ENCODE measurements at regions of chr10 and their contacts with region 1.

Region 1: GRCh38 chr10:21099291-21100062 is 202.4 kb upstream of the NEBL start:
- DNase-seq: no peak
- ATAC-seq: no peak
- H3K4me3 ChIP-seq: no peak overlapping the region
- H3K27ac ChIP-seq: no peak overlapping the region
- H3K4me1 ChIP-seq: peaks cover 36% of the 10 kb centered on the region
- H3K27me3 ChIP-seq: no peaks in the 10 kb centered on the region
- CTCF ChIP-seq: no peak

Region 2: GRCh38 chr10:20795391-20795790 is 304.1 kb before region 1 on chr10:
- CTCF ChIA-PET with region 1: no interaction called
- POLR2A ChIA-PET with region 1: no interaction called
- intact Hi-C with region 1: no loop called
- DNase-seq: no peak
- ATAC-seq: no peak
- H3K4me3 ChIP-seq: no peak overlapping the region
- H3K27ac ChIP-seq: no peak overlapping the region
- H3K4me1 ChIP-seq: no peaks in the 10 kb centered on the region
- H3K27me3 ChIP-seq: no peaks in the 10 kb centered on the region
- CTCF ChIP-seq: no peak

Region 3: GRCh38 chr10:21083871-21084295 is 15.6 kb before region 1 on chr10:
- CTCF ChIA-PET with region 1: no interaction called
- POLR2A ChIA-PET with region 1: no interaction called
- intact Hi-C with region 1: no loop called
- DNase-seq: peak; percentile 97
- ATAC-seq: peak; percentile 80
- H3K4me3 ChIP-seq: no peak overlapping the region
- H3K27ac ChIP-seq: peak overlapping the region; percentile 70
- H3K4me1 ChIP-seq: peaks cover 34% of the 10 kb centered on the region
- H3K27me3 ChIP-seq: no peaks in the 10 kb centered on the region
- CTCF ChIP-seq: no peak

Region 4: DNA sequence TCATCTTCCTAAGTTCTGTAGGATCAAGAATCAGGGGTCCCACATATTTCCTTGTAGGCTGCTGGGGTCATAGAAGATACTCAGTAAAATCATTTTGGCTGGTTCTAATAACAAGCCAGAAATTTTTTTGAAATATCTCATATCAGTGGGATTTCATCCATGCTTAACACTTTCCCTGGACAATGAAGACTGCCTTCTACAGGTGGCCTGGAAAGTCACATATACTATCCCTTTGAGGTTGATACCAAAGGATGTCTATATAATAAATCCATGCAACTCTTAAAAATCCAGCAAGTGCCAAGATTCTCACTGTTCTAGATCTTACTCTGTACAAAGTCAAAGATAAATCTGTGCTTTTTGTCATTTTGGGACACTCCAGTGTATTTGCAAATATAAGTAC is 23.4 kb after region 1 on chr10:
- CTCF ChIA-PET with region 1: no interaction called
- POLR2A ChIA-PET with region 1: no interaction called
- intact Hi-C with region 1: no loop called
- DNase-seq: no peak
- ATAC-seq: no peak
- H3K4me3 ChIP-seq: no peak overlapping the region
- H3K27ac ChIP-seq: no peak overlapping the region
- H3K4me1 ChIP-seq: no peaks in the 10 kb centered on the region
- H3K27me3 ChIP-seq: no peaks in the 10 kb centered on the region
- CTCF ChIP-seq: no peak

Region 5: DNA sequence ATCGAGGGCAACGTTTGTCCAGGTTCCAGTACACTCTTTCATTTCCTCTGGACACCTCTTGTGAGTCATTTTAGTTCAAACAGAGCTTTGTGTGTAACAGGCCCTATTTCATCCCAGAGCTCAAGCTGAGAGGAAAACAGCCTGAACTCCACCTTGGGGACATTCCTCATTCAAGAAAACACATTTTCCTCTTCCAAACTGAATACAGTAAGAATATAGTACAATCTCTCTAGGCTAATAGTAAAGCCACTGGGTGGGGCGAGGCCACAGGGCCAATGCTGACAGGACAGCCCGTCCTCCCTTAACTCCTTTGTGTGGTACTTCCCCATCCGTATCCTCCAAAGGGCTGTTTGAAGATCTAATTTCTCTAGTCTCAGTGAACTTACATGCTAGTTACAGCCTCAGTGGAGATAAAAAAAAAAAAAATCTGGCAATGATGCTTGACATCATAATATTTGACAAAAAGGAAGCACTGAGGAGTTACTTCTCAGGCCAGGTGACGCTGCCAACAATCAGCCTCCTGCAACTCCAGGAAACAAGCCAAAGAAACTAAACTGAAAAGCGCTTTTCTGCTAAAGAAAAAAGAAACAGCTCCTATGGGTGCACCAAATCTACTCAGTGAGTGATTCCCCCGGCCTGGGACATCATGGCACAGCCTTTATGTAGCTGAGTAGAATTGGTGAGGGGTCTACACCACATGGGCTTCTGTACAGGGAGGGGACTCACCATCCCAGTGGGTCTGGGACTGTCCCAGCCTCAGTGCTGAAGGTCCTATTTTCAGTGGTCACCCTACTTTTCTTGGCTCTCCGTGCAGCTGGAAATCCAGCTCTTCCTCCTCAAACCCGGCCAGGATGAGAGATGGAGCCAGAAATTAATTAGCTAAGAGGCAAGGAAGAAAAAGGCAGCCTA is 35.8 kb after region 1 on chr10:
- CTCF ChIA-PET with region 1: interaction called, 4 read pairs
- POLR2A ChIA-PET with region 1: no interaction called
- intact Hi-C with region 1: loop called (anchors 1 kb)
- DNase-seq: peak; percentile 94
- ATAC-seq: peak; percentile 92
- H3K4me3 ChIP-seq: peak overlapping the region; percentile 56; the same call in 1 of the 2 replicates
- H3K27ac ChIP-seq: peak overlapping the region; percentile 98
- H3K4me1 ChIP-seq: peaks cover 28% of the 10 kb centered on the region
- H3K27me3 ChIP-seq: no peaks in the 10 kb centered on the region
- CTCF ChIP-seq: no peak

Region 6: DNA sequence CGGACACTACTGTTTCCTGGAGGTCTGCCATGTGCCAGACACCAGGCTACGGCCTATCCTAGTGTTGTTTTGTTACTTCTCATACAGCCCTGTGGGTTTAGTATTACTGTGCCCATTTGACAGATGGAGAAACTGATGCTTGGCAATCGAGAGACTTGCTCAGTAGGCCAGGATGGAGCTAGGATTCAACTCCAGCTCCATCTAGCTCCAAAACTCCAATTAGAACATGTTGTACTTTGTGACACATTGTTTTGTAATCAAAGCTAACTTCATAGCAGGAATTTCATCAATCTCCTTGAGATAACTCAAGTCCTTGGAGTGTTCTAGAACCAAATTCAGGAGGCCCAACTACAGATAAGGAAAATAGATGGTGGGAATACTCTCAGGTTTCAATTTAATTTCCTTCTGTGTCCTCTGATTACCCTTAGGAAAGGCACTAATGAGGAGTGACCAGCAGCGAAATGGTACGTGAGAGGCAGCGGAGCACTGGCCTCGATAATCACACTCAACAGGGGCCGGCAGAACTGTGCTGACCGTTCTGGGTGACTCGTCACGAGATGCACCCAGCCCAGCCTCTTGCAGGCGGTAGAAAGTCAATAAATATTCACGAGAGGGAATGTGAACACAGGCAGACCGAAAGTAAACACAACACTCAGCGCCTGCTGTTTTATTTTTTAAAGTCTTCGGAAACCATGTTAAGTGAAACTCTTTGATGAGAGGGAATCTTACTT is 67.2 kb after region 1 on chr10:
- CTCF ChIA-PET with region 1: no interaction called
- POLR2A ChIA-PET with region 1: no interaction called
- intact Hi-C with region 1: loop called (anchors 5 kb)
- DNase-seq: peak; percentile 12
- ATAC-seq: peak; percentile 69
- H3K4me3 ChIP-seq: peak overlapping the region; percentile 43
- H3K27ac ChIP-seq: no peak overlapping the region
- H3K4me1 ChIP-seq: peaks cover 15% of the 10 kb centered on the region
- H3K27me3 ChIP-seq: no peaks in the 10 kb centered on the region
- CTCF ChIP-seq: no peak